ENCODE measurements at regions of chr10 and their contacts with region 1.

Region 1: DNA sequence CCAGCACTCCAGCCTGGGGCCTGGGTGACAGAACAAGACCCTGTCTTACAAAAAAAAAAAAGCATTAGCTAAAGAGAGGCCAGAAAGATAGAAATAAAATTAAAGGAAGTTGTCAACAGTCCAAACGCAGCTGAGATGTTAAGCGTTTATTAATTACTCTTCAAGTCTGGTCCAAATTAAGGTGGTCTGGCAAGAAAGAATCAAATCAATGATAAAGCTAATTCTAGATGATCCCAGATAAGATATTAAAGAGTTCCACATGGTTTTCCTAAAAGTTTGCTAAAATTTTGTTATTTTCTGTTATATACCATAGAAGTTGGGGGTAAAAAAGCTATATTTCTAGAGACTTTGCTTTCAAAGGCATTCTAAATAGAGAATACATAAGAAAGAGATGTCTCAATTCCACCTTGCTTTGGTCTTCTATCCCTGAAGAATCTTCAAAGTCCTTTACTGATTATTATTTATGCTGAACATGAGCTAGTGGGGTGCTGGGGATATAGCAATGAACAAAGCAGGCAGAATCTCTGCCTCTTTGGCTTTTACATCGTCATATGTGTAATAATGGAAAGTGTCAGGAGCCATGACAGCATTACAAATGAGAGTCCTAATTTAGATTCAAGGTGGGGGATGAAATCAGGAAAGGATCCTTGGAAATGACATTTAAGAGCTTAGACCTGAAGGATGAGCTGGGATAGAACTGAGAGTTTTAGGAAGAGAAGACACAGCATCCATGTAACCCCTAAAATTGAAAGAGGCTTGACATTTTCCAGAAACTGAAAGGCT is 23.4 kb downstream of the FRA10AC1 start:
- DNase-seq: no peak
- H3K4me3 ChIP-seq: no peak overlapping the region
- H3K27ac ChIP-seq: no peak overlapping the region
- H3K4me1 ChIP-seq: no peaks in the 10 kb centered on the region
- H3K27me3 ChIP-seq: no peaks in the 10 kb centered on the region
- CTCF ChIP-seq: no peak
- EP300 ChIP-seq: no peak
- POLR2A ChIP-seq: no peak

Region 2: DNA sequence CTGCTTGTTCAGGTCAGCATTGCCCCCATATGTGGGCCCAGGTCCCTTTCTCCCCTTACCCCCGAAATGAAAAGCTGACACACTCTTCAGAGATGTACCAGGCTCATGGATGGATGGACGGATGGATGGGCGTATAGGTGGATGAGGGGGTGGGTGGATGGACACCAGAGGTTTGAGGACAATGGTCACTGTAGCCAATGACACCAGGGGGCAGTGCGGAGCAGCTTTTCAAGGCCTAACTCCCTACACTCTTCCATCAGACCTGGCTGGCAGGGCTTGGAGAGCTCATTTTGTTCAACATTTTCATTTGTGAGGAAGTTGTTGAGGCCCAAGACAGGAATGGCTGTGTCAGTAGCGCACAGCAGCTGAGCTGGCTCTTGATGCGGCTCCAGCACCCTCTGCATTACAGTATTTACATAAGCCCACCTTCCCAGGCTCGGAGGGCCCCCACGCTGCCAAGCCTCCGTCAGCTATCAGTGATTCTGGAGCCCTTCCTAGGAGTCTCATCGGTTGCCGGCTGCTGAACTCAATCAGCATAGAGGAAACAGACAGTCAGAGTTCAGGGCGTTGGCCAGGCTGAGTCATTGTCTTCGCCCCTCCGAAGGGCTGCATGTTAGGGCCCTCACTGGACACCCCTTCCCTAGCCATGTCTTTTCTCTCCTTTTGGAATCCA is 124.1 kb before region 1 on chr10:
- intact Hi-C with region 1: loop called (anchors 5 kb)
- DNase-seq: peak; percentile 77 to 90
- H3K4me3 ChIP-seq: no peak overlapping the region
- H3K27ac ChIP-seq: no peak overlapping the region
- H3K4me1 ChIP-seq: peaks cover 0 to 8% (median 0%) of the 10 kb centered on the region in 4 donors
- H3K27me3 ChIP-seq: no peaks in the 10 kb centered on the region
- CTCF ChIP-seq: peak in 5 of 7 experiments; percentile 37 to 65 (median 54)
- EP300 ChIP-seq: no peak
- POLR2A ChIP-seq: no peak

Measured in stomach (tissue), 19 donors.